CD4-positive, alpha-beta memory T cell (primary cell): ENCODE measurements at regions of chr11 and their contacts with region 1.

Region 1: GRCh38 chr11:63614136-63614664 is at the start of gene PLAAT3:
- DNase-seq: peak; percentile 16 to 40 (median 19)
- H3K4me3 ChIP-seq: peak within 1 kb of the TSS; percentile 47 to 67
- H3K4me3 Mint-ChIP-seq: peak within 1 kb of the TSS; percentile 87 to 93 (median 89)
- H3K27ac ChIP-seq: peak within 1 kb of the TSS; percentile 47
- H3K27ac Mint-ChIP-seq: peak within 1 kb of the TSS; percentile 73 to 88 (median 80)
- H3K4me1 ChIP-seq: no peaks in the 10 kb centered on the region
- H3K4me1 Mint-ChIP-seq: peaks cover 9 to 33% (median 22%) of the 10 kb centered on the region in 4 donors
- H3K27me3 ChIP-seq: no peaks in the 10 kb centered on the region
- H3K27me3 Mint-ChIP-seq: no peaks in the 10 kb centered on the region
- total RNA-seq, gene PLAAT3: 3.6 to 4.7 TPM

Region 2: GRCh38 chr11:63573881-63574855 is 40.0 kb before region 1 on chr11:
- CTCF ChIA-PET with region 1: no interaction called
- POLR2A ChIA-PET with region 1: interaction called, 3 read pairs
- intact Hi-C with region 1: loop called (anchors 5 kb)
- DNase-seq: peak in 4 of 5 donors; percentile 27 to 52 (median 34)
- H3K4me3 ChIP-seq: peak overlapping the region; percentile 4 to 34
- H3K4me3 Mint-ChIP-seq: peak overlapping the region; percentile 84 to 94 (median 89)
- H3K27ac ChIP-seq: peak overlapping the region; percentile 36
- H3K27ac Mint-ChIP-seq: peak overlapping the region; percentile 25 to 98 (median 90)
- H3K4me1 ChIP-seq: peaks cover 15% of the 10 kb centered on the region
- H3K4me1 Mint-ChIP-seq: peaks cover 14 to 22% (median 19%) of the 10 kb centered on the region in 4 donors
- H3K27me3 ChIP-seq: no peaks in the 10 kb centered on the region
- H3K27me3 Mint-ChIP-seq: no peaks in the 10 kb centered on the region

Region 3: GRCh38 chr11:63671322-63672155 is 57.3 kb after region 1 on chr11 and contains the start of gene ATL3:
- CTCF ChIA-PET with region 1: no interaction called
- POLR2A ChIA-PET with region 1: no interaction called
- intact Hi-C with region 1: loop called (anchors 1 kb)
- DNase-seq: peak; percentile 91 to 94 (median 92)
- H3K4me3 ChIP-seq: peak within 1 kb of the TSS; percentile 55 to 91
- H3K4me3 Mint-ChIP-seq: peak within 1 kb of the TSS; percentile 83 to 91 (median 86)
- H3K27ac ChIP-seq: peak within 1 kb of the TSS; percentile 79
- H3K27ac Mint-ChIP-seq: peak within 1 kb of the TSS; percentile 77 to 93 (median 87)
- H3K4me1 ChIP-seq: peaks cover 43% of the 10 kb centered on the region
- H3K4me1 Mint-ChIP-seq: peaks cover 20 to 41% (median 26%) of the 10 kb centered on the region in 4 donors
- H3K27me3 ChIP-seq: no peaks in the 10 kb centered on the region
- H3K27me3 Mint-ChIP-seq: no peaks in the 10 kb centered on the region
- total RNA-seq, gene ATL3: 40.4 to 43.3 TPM